Activated CD4-positive, alpha-beta memory T cell treated with anti-CD3 and anti-CD28 coated beads for 36 hours (primary cell): ENCODE measurements at regions of chr14 and their contacts with region 1.

Region 1: DNA sequence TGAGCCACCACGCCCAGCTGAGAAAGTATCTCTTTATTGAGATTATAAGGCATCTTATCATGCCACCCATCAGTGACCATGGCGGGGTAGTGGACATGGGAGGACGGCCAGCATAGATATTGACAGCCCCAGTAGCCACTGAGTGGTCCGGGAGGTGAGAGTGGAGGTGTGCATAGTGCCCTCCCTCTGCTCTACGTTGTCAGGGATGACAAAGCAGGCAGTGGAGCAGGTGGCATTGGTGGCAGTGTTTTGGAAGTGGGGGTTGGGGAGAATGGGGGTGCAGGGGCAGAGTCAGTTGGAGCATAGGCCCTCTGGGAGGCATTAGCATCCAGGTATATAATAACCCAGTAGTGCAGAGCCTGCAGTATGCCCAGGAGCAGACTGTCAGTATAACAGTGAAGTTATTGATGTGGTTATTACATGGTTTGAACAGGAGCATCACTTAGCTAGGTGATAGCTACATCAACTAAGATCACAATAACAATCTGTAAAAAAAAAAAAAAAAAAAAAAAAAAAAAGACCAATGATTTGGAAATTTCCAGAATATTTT is 41.1 kb downstream of the GNG2 start:
- DNase-seq: no peak
- H3K4me3 Mint-ChIP-seq: no peak overlapping the region
- H3K27ac Mint-ChIP-seq: peak overlapping the region; percentile 6
- H3K4me1 Mint-ChIP-seq: peaks cover 69% of the 10 kb centered on the region
- H3K27me3 Mint-ChIP-seq: no peaks in the 10 kb centered on the region

Region 2: GRCh38 chr14:51865953-51866747 is 35.4 kb before region 1 on chr14:
- CTCF ChIA-PET with region 1: interaction called, 4 read pairs
- POLR2A ChIA-PET with region 1: interaction called, 6 read pairs
- intact Hi-C with region 1: loop called (anchors 1 kb)
- DNase-seq: peak; percentile 46
- H3K4me3 Mint-ChIP-seq: no peak overlapping the region
- H3K27ac Mint-ChIP-seq: no peak overlapping the region
- H3K4me1 Mint-ChIP-seq: peaks cover 19% of the 10 kb centered on the region
- H3K27me3 Mint-ChIP-seq: no peaks in the 10 kb centered on the region

Region 3: GRCh38 chr14:51873221-51873893 is 28.2 kb before region 1 on chr14:
- CTCF ChIA-PET with region 1: interaction called, 4 read pairs
- POLR2A ChIA-PET with region 1: interaction called, 6 read pairs
- intact Hi-C with region 1: loop called (anchors 1 kb)
- DNase-seq: peak; percentile 68
- H3K4me3 Mint-ChIP-seq: peak overlapping the region; percentile 30
- H3K27ac Mint-ChIP-seq: peak overlapping the region; percentile 85
- H3K4me1 Mint-ChIP-seq: peaks cover 60% of the 10 kb centered on the region
- H3K27me3 Mint-ChIP-seq: no peaks in the 10 kb centered on the region

Region 4: DNA sequence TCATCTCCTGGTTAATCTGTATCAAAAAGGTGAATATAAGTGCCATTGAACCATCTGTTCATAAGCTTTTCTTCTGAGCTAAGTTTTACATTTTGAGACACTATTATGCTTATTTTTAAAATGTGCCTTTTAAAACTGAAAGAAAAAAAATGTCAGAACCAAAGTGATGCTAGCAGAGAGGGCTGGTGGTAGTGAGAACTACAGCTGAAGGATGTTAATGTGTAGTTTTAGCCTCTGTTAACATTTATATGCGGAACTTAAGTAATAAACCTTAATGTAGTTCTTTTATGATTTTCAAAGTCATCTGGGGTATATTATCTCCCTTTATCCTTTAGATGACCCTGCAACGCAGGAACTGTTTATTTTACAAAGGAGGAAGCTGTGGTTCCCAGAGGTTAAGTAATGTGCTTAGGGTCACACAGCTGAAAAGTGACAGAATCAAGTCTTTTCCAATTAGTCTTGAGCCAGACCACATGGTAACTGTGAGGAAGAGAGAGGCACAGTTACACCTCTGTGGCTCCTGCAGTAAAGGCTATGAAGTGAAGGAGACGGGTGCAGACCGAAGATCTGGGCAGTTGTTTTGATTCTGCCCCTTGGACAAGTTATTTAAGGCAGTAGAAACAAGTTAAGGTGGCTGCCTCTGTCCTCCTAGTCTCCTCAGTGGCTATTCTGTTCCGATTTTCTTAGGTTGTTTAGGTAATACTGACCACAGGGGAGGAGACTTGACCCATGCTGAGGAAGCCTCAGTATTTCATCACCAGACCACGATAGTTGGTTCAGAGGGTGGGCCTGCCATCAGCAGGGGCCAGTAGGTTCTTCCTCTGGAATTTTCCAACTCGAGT is 17.2 kb before region 1 on chr14:
- CTCF ChIA-PET with region 1: interaction called, 5 read pairs
- POLR2A ChIA-PET with region 1: no interaction called
- intact Hi-C with region 1: loop called (anchors 2 kb)
- DNase-seq: no peak
- H3K4me3 Mint-ChIP-seq: peak overlapping the region; percentile 25
- H3K27ac Mint-ChIP-seq: peak overlapping the region; percentile 30
- H3K4me1 Mint-ChIP-seq: peaks cover 68% of the 10 kb centered on the region
- H3K27me3 Mint-ChIP-seq: no peaks in the 10 kb centered on the region

Region 5: DNA sequence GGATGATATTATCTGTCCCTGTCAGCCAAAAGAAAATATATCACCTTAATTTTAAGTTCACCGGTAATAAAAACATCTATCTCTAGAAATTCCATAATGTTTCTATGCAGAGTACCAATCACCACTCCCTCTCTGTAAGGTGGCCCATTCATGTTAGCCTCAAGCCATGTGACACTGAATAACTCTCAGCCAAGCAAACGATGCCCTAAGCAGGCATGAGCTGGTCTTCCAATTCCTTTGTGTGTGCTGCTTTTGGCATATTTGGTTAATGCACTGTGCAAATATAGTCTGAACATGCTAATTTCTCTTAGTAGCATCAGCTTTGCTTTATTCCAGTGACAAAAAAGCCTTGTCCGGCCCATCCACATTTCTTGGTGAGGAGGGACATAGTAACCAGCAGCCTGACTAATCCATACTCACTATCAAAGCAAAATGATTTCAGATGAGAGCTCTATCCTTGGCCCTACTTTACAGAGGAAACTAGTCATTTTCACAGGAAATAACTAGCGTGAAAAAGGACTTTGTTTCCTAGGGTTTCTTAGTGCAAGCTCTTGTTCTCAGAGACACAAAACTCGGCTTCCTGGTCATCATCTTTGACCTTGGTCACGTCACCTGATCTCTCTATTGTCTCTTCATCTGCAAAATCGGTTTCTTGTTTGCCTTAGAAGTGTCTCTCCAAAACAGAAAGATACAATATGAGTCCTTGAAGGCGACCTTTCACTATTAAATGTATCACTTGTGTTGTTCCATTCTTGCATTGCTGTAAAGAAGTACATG is 28.5 kb after region 1 on chr14:
- CTCF ChIA-PET with region 1: no interaction called
- POLR2A ChIA-PET with region 1: no interaction called
- intact Hi-C with region 1: loop called (anchors 1 kb)
- DNase-seq: no peak
- H3K4me3 Mint-ChIP-seq: no peak overlapping the region
- H3K27ac Mint-ChIP-seq: peak overlapping the region; percentile 81
- H3K4me1 Mint-ChIP-seq: peaks cover 69% of the 10 kb centered on the region
- H3K27me3 Mint-ChIP-seq: no peaks in the 10 kb centered on the region

Region 6: GRCh38 chr14:52166822-52167221 is 265.3 kb after region 1 on chr14:
- CTCF ChIA-PET with region 1: no interaction called
- POLR2A ChIA-PET with region 1: no interaction called
- intact Hi-C with region 1: no loop called
- DNase-seq: no peak
- H3K4me3 Mint-ChIP-seq: no peak overlapping the region
- H3K27ac Mint-ChIP-seq: no peak overlapping the region
- H3K4me1 Mint-ChIP-seq: no peaks in the 10 kb centered on the region
- H3K27me3 Mint-ChIP-seq: no peaks in the 10 kb centered on the region